CD14-positive monocyte (primary cell): ENCODE measurements at regions of chr11 and their contacts with region 1.

Region 1: GRCh38 chr11:61439615-61440014 is 9.7 kb downstream of the SDHAF2 start:
- DNase-seq: no peak
- H3K4me3 ChIP-seq: no peak overlapping the region
- H3K4me3 Mint-ChIP-seq: no peak overlapping the region
- H3K27ac ChIP-seq: no peak overlapping the region
- H3K27ac Mint-ChIP-seq: peak overlapping the region in 1 of 7 donors; percentile 61
- H3K4me1 ChIP-seq: peaks cover 0 to 3% of the 10 kb centered on the region in 2 donors
- H3K4me1 Mint-ChIP-seq: peaks cover 6% of the 10 kb centered on the region
- H3K27me3 ChIP-seq: no peaks in the 10 kb centered on the region
- H3K27me3 Mint-ChIP-seq: no peaks in the 10 kb centered on the region
- CTCF ChIP-seq: no peak

Region 2: DNA sequence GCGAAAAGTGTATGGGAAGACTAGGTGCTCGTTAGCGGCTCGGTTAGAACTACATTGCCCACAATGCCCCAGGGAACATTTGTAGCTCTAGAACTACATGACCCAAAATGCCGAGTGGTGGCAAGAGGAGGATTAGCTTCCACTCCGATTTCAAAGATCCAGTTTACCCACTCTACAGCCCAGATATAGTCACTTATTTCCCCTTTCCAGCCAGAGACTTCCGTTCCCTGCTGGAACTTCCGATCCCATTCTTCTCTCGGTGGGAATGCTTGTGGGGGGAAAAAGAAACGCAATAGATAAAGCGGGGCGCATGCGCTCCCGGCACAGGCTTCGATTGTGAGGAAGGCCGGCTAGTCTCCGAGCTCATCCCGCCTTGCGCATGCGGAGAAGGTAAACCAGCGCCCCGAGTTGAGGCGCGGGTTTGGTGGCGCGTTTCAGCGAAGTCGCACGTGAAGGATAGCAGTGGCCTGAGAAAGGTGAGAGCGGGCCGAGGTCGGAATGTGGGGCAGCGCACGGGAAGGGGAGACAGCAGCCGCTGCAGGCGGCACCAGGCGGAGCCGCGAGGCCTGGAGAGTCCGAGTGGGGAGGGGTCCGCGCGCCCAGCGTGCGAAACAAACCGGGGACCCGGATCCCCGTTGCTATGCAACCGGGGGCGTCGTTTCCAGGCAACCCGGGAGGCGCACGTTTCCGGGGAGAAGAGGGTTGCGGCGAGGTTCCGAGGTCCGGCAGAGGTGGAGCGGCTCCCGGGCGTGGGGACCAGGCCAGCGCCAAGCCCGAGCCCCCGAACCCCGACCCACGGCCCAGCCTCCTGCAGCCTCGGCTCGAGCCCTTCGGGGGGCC is 525.6 kb before region 1 on chr11 and contains the start of gene TMEM109:
- intact Hi-C with region 1: no loop called
- DNase-seq: peak; percentile 66 to 85 (median 80)
- H3K4me3 ChIP-seq: peak within 1 kb of the TSS; percentile 78 to 93 (median 83)
- H3K4me3 Mint-ChIP-seq: peak within 1 kb of the TSS; percentile 99 to 100
- H3K27ac ChIP-seq: peak within 1 kb of the TSS; percentile 59 to 84
- H3K27ac Mint-ChIP-seq: peak within 1 kb of the TSS; percentile 92 to 98 (median 95)
- H3K4me1 ChIP-seq: peaks cover 81% of the 10 kb centered on the region in 2 donors
- H3K4me1 Mint-ChIP-seq: peaks cover 81% of the 10 kb centered on the region
- H3K27me3 ChIP-seq: no peaks in the 10 kb centered on the region
- H3K27me3 Mint-ChIP-seq: peaks cover 0 to 3% (median 0%) of the 10 kb centered on the region in 3 donors
- CTCF ChIP-seq: no peak
- polyA plus RNA-seq, gene TMEM109: 22.7 to 112 (median 110) TPM

Region 3: GRCh38 chr11:61392981-61393595 is 46.5 kb before region 1 on chr11:
- intact Hi-C with region 1: loop called in 1 of 2 experiments (anchors 5 kb)
- DNase-seq: no peak
- H3K4me3 ChIP-seq: peak overlapping the region; percentile 90 to 94 (median 90)
- H3K4me3 Mint-ChIP-seq: peak overlapping the region; percentile 96 to 97
- H3K27ac ChIP-seq: peak overlapping the region; percentile 67 to 88
- H3K27ac Mint-ChIP-seq: peak overlapping the region; percentile 87 to 96 (median 93)
- H3K4me1 ChIP-seq: peaks cover 17 to 19% of the 10 kb centered on the region in 2 donors
- H3K4me1 Mint-ChIP-seq: peaks cover 18% of the 10 kb centered on the region
- H3K27me3 ChIP-seq: no peaks in the 10 kb centered on the region
- H3K27me3 Mint-ChIP-seq: no peaks in the 10 kb centered on the region
- CTCF ChIP-seq: no peak

Region 4: GRCh38 chr11:61422226-61422625 is 17.4 kb before region 1 on chr11:
- intact Hi-C with region 1: no loop called
- DNase-seq: no peak
- H3K4me3 ChIP-seq: no peak overlapping the region
- H3K4me3 Mint-ChIP-seq: no peak overlapping the region
- H3K27ac ChIP-seq: peak overlapping the region in 1 of 2 donors; percentile 2
- H3K27ac Mint-ChIP-seq: peak overlapping the region in 5 of 7 donors; percentile 25 to 68 (median 57)
- H3K4me1 ChIP-seq: peaks cover 14 to 15% of the 10 kb centered on the region in 2 donors
- H3K4me1 Mint-ChIP-seq: peaks cover 19% of the 10 kb centered on the region
- H3K27me3 ChIP-seq: no peaks in the 10 kb centered on the region
- H3K27me3 Mint-ChIP-seq: peaks cover 0 to 1% (median 0%) of the 10 kb centered on the region in 3 donors
- CTCF ChIP-seq: no peak